CD8-positive, alpha-beta T cell (primary cell): ENCODE measurements at regions of chr12 and their contacts with region 1.

Region 1: GRCh38 chr12:120710031-120710804 is at the start of gene UNC119B:
- DNase-seq: peak; percentile 38 to 85 (median 77)
- ATAC-seq: peak; percentile 88
- H3K4me3 ChIP-seq: peak within 1 kb of the TSS; percentile 64 to 68
- H3K4me3 Mint-ChIP-seq: peak within 1 kb of the TSS; percentile 93
- H3K27ac ChIP-seq: peak within 1 kb of the TSS; percentile 40 to 70
- H3K27ac Mint-ChIP-seq: peak within 1 kb of the TSS; percentile 89
- H3K4me1 ChIP-seq: peaks cover 22% of the 10 kb centered on the region
- H3K4me1 Mint-ChIP-seq: peaks cover 37% of the 10 kb centered on the region
- H3K27me3 ChIP-seq: no peaks in the 10 kb centered on the region
- H3K27me3 Mint-ChIP-seq: no peaks in the 10 kb centered on the region
- CTCF ChIP-seq: no peak
- total RNA-seq, gene UNC119B: 8.1 to 8.4 TPM

Region 2: DNA sequence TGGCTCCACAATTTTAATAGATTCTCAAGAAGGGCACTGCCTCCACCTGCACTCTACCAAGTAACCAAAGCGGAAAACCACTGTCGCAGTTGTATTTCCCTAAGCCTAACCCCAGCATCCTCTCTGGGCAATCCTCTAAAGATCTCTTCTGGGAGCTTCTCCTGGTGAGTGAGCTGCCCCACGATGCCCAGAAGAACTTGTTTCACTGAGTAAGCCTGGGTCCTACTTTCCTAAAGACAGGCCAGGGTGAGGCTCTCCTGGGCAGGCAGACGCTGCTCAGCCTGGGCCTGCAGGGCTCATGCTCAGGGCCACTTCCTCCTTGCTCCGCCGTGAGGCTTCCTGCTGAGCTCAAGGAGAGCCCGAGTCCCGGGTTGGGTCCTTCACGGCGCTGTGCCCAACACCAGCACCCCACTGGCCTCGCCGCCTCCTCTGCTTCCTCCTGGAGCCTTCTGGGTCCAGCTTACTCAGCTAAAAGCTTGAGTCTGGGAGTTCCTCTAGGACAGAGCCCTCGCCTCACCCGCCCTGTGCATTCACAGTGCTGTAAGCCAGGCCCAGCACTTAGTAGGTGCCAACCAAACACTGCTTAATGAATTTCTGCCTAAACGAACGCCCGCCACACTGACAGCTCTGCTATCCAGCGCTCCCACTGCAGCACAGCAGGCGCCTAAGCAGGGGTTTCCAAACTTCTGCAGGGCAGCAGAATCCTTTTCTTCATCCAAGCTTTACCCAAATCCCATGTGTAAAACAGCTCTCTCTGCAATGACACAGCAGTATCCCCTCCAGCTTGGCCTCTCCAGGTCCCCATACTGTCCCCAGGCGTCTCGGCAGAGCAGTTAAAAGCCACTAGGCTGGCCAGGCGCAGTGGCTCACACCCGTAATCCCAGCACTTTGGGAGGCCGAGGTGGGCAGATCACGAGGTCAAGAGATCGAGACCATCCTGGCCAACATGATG is 599.4 kb before region 1 on chr12:
- CTCF ChIA-PET with region 1: no interaction called
- POLR2A ChIA-PET with region 1: no interaction called
- intact Hi-C with region 1: no loop called
- DNase-seq: peak; percentile 14 to 71 (median 54)
- ATAC-seq: peak; percentile 79
- H3K4me3 ChIP-seq: peak overlapping the region; percentile 17 to 41
- H3K4me3 Mint-ChIP-seq: peak overlapping the region; percentile 72
- H3K27ac ChIP-seq: peak overlapping the region; percentile 21 to 62
- H3K27ac Mint-ChIP-seq: peak overlapping the region; percentile 86
- H3K4me1 ChIP-seq: peaks cover 41% of the 10 kb centered on the region
- H3K4me1 Mint-ChIP-seq: peaks cover 73% of the 10 kb centered on the region
- H3K27me3 ChIP-seq: no peaks in the 10 kb centered on the region
- H3K27me3 Mint-ChIP-seq: no peaks in the 10 kb centered on the region
- CTCF ChIP-seq: no peak

Region 3: GRCh38 chr12:120680165-120680738 is 30.0 kb before region 1 on chr12:
- CTCF ChIA-PET with region 1: no interaction called
- POLR2A ChIA-PET with region 1: no interaction called
- intact Hi-C with region 1: no loop called
- DNase-seq: no peak
- ATAC-seq: no peak
- H3K4me3 ChIP-seq: no peak overlapping the region
- H3K4me3 Mint-ChIP-seq: no peak overlapping the region
- H3K27ac ChIP-seq: no peak overlapping the region
- H3K27ac Mint-ChIP-seq: no peak overlapping the region
- H3K4me1 ChIP-seq: no peaks in the 10 kb centered on the region
- H3K4me1 Mint-ChIP-seq: peaks cover 5% of the 10 kb centered on the region
- H3K27me3 ChIP-seq: no peaks in the 10 kb centered on the region
- H3K27me3 Mint-ChIP-seq: peaks cover 1% of the 10 kb centered on the region
- CTCF ChIP-seq: no peak

Region 4: GRCh38 chr12:120725659-120726509 is 15.7 kb after region 1 on chr12 and contains the start of gene ACADS:
- CTCF ChIA-PET with region 1: interaction called, 3 read pairs
- POLR2A ChIA-PET with region 1: no interaction called
- intact Hi-C with region 1: loop called (anchors 1 kb)
- DNase-seq: peak; percentile 75 to 93 (median 89)
- ATAC-seq: peak; percentile 100
- H3K4me3 ChIP-seq: peak within 1 kb of the TSS; percentile 49 to 64
- H3K4me3 Mint-ChIP-seq: peak within 1 kb of the TSS; percentile 93
- H3K27ac ChIP-seq: peak within 1 kb of the TSS; percentile 37 to 56
- H3K27ac Mint-ChIP-seq: peak within 1 kb of the TSS; percentile 84
- H3K4me1 ChIP-seq: peaks cover 13% of the 10 kb centered on the region
- H3K4me1 Mint-ChIP-seq: peaks cover 24% of the 10 kb centered on the region
- H3K27me3 ChIP-seq: no peaks in the 10 kb centered on the region
- H3K27me3 Mint-ChIP-seq: no peaks in the 10 kb centered on the region
- CTCF ChIP-seq: no peak
- total RNA-seq, gene ACADS: 7.3 to 9.1 TPM

Region 5: DNA sequence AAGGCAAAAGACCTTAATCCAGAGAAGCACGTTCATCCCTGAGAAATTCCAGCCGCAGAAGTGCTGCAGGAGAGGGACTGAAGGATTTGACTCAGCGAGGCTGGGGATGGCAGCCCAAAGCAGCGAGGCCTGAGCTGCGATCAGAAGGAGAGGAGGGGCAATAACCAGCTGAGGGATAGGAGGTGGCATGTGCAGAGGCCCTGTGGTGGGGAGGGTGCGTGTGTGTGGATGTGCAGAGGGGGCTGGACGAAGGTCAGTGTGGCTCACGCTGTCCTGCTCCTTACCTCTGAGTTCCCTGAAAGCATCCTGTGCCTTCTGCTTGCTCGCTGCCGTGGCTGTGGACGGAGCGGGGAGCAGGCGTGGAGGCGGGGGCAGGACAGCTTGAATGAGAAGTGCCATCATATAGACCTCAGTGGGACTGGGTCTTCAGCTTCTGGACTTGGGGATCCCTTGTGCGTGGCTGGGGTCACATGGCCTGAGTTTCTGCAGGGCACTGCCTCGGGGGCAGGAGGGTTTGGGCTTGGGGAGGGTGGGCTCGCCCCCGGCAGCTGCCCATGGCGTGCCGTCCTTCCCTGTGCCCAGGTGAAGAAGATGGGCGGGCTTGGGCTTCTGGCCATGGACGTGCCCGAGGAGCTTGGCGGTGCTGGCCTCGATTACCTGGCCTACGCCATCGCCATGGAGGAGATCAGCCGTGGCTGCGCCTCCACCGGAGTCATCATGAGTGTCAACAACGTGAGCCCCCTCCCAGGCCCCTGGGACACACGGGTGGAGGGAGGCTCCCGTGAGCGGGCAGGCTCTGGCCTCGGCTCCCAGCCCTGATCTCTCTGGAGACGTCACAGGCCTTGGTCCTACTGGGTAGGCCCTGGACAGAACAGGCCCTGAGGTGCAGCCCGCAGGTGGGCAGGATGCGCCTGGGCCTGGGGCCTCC is 26.4 kb after region 1 on chr12:
- CTCF ChIA-PET with region 1: no interaction called
- POLR2A ChIA-PET with region 1: no interaction called
- intact Hi-C with region 1: no loop called
- DNase-seq: no peak
- ATAC-seq: no peak
- H3K4me3 ChIP-seq: no peak overlapping the region
- H3K4me3 Mint-ChIP-seq: no peak overlapping the region
- H3K27ac ChIP-seq: no peak overlapping the region
- H3K27ac Mint-ChIP-seq: no peak overlapping the region
- H3K4me1 ChIP-seq: no peaks in the 10 kb centered on the region
- H3K4me1 Mint-ChIP-seq: no peaks in the 10 kb centered on the region
- H3K27me3 ChIP-seq: no peaks in the 10 kb centered on the region
- H3K27me3 Mint-ChIP-seq: no peaks in the 10 kb centered on the region
- CTCF ChIP-seq: no peak

Region 6: GRCh38 chr12:120761519-120761934 is 51.3 kb after region 1 on chr12:
- CTCF ChIA-PET with region 1: no interaction called
- POLR2A ChIA-PET with region 1: no interaction called
- intact Hi-C with region 1: no loop called
- DNase-seq: no peak
- ATAC-seq: no peak
- H3K4me3 ChIP-seq: no peak overlapping the region
- H3K4me3 Mint-ChIP-seq: no peak overlapping the region
- H3K27ac ChIP-seq: no peak overlapping the region
- H3K27ac Mint-ChIP-seq: no peak overlapping the region
- H3K4me1 ChIP-seq: no peaks in the 10 kb centered on the region
- H3K4me1 Mint-ChIP-seq: peaks cover 1% of the 10 kb centered on the region
- H3K27me3 ChIP-seq: no peaks in the 10 kb centered on the region
- H3K27me3 Mint-ChIP-seq: no peaks in the 10 kb centered on the region
- CTCF ChIP-seq: no peak